ENCODE measurements at regions of chr18 and their contacts with region 1.

Region 1: GRCh38 chr18:33532978-33533377 is 45.0 kb upstream of the ASXL3 start:
- DNase-seq: no peak
- ATAC-seq: no peak
- H3K4me3 Mint-ChIP-seq: no peak overlapping the region
- H3K27ac Mint-ChIP-seq: no peak overlapping the region
- H3K4me1 Mint-ChIP-seq: no peaks in the 10 kb centered on the region
- H3K27me3 Mint-ChIP-seq: no peaks in the 10 kb centered on the region
- CTCF ChIP-seq: no peak

Region 2: DNA sequence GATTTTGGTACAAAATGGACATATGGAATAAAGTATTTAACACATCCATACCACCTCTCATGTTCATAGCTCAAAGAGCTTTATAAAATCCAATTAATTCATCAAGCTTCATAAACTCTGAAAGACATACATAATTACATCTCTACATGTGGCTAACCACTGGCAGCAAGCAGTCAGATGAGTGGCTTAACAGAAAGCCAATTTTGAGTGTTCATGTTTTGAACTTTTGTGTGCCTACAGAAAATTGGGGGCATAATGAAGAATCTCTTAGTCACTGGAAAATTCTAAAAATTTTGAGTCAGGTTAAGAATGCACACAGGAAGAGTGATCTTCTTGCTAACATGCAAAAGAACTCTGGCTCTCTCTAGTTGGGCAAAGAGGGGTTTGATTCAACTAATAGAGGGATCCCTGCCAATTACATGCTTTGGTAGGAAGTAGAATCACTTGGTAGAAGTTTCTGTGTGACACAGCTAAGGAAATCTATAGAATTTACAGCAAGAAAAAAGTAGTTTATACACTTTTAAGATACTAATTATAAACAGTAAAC is 404.4 kb after region 1 on chr18:
- CTCF ChIA-PET with region 1: no interaction called
- POLR2A ChIA-PET with region 1: no interaction called
- intact Hi-C with region 1: loop called (anchors 10 kb)
- DNase-seq: no peak
- ATAC-seq: no peak
- H3K4me3 Mint-ChIP-seq: no peak overlapping the region
- H3K27ac Mint-ChIP-seq: no peak overlapping the region
- H3K4me1 Mint-ChIP-seq: no peaks in the 10 kb centered on the region
- H3K27me3 Mint-ChIP-seq: no peaks in the 10 kb centered on the region
- CTCF ChIP-seq: no peak

Region 3: GRCh38 chr18:34480162-34480561 is 947.2 kb after region 1 on chr18:
- CTCF ChIA-PET with region 1: no interaction called
- POLR2A ChIA-PET with region 1: no interaction called
- intact Hi-C with region 1: no loop called
- DNase-seq: no peak
- ATAC-seq: no peak
- H3K4me3 Mint-ChIP-seq: no peak overlapping the region
- H3K27ac Mint-ChIP-seq: no peak overlapping the region
- H3K4me1 Mint-ChIP-seq: no peaks in the 10 kb centered on the region
- H3K27me3 Mint-ChIP-seq: no peaks in the 10 kb centered on the region
- CTCF ChIP-seq: no peak